Activated B cell treated with CpG ODN at 0.5 μM for 24 hours (primary cell): ENCODE measurements at regions of chr12 and their contacts with region 1.

Region 1: GRCh38 chr12:66860752-66861750 is 182.2 kb upstream of the GRIP1 start:
- DNase-seq: peak; percentile 32
- ATAC-seq: peak; percentile 50
- H3K4me3 Mint-ChIP-seq: no peak overlapping the region
- H3K27ac Mint-ChIP-seq: no peak overlapping the region
- H3K4me1 Mint-ChIP-seq: no peaks in the 10 kb centered on the region
- H3K27me3 Mint-ChIP-seq: peaks cover 11% of the 10 kb centered on the region
- CTCF ChIP-seq: peak; percentile 99

Region 2: DNA sequence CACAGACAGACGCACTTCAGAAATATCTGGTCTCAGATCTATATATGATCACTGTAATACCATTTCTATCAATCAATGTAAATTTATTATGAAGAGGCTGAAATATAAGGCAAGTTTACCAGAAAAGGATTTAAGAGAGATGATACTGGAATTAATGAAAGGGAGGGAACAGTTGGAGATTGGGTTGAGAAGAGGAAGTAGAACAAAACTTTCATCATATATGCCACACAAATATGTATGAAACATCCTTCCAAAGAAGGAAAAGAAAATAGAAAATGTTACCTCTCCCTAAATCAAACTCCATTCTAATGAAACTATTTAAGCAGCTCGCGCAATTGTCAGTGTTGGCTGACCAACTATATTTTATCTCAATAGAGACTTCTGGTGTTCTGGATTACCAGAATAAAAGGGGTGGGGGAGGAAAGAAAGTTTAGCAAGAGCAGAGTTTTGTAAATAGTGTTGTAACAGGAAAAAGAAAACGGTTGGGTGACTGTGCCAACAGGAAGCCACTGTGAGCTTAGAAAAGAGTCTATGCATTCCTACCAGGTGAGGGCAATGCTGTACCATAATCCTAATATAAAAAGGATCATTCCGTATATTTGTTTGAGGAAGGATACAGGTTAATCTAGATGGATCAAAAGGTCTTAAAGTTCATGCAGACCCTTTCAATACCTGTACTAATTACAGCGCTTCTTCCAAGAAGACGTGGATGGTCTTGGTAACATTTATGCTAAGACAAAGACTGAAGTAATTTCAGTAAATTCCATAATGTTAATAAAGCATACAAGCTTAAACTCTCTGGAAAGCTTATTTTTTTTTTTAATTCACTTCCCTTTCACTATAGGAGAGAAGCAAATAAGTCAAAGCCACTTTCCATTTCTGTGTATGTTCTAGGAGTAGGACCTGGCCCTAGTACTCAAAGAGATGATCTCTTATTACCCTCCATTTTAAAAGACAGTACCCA is 716.0 kb before region 1 on chr12:
- CTCF ChIA-PET with region 1: interaction called, 3 read pairs
- POLR2A ChIA-PET with region 1: no interaction called
- intact Hi-C with region 1: loop called (anchors 2 kb)
- DNase-seq: no peak
- ATAC-seq: no peak
- H3K4me3 Mint-ChIP-seq: no peak overlapping the region
- H3K27ac Mint-ChIP-seq: peak overlapping the region; percentile 56
- H3K4me1 Mint-ChIP-seq: peaks cover 20% of the 10 kb centered on the region
- H3K27me3 Mint-ChIP-seq: no peaks in the 10 kb centered on the region
- CTCF ChIP-seq: no peak

Region 3: DNA sequence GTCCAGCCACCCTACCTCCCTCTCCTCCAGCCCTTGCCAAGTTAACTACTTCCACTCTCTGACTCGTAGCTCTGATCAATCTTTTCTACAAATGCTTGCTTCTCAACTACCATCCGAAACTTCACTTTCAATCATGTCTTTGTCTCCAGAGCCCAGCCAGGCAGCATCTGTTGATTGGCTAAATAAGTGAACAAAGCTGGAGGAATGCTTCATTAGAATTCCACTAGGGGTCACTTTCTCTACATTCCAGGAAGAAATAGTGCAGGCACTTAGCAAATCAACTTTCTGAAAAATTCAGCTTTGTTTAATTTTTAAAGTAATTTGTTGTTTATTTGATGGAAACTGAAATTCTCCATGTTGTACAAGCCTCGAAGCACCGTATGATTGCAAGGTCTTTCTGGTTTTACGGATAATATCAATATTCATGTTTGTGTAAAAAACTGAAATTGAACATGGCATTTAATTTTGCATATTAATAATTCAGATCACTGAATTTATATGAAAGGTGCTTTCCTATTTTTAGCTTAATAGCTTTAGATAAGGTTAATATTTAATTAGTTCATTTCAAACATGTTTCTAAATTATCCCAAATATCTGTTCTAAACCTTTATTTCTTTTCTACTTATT is 591.2 kb before region 1 on chr12:
- CTCF ChIA-PET with region 1: interaction called, 10 read pairs
- POLR2A ChIA-PET with region 1: no interaction called
- intact Hi-C with region 1: loop called (anchors 1 kb)
- DNase-seq: no peak
- ATAC-seq: no peak
- H3K4me3 Mint-ChIP-seq: no peak overlapping the region
- H3K27ac Mint-ChIP-seq: no peak overlapping the region
- H3K4me1 Mint-ChIP-seq: no peaks in the 10 kb centered on the region
- H3K27me3 Mint-ChIP-seq: peaks cover 2% of the 10 kb centered on the region
- CTCF ChIP-seq: no peak

Region 4: DNA sequence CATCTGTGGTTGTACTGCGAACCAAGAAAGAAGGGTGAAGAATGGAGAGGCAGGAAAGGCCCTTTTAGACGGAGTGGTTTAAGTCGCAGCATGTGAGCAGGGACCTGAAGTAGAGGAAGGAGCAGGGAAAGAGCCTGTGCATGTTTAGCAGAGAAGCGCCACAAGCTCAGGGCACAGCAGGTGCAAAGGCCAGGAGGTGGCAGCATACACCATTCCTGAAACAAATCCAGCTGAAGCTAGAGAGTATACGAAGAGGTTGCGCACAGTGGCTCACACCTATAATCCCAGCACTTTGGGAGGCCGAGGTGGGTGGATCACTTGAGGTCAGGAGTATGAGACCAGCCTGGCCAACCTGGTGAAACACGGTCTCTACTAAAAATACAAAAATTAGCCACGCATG is 508.9 kb before region 1 on chr12:
- CTCF ChIA-PET with region 1: interaction called, 9 read pairs
- POLR2A ChIA-PET with region 1: no interaction called
- intact Hi-C with region 1: loop called (anchors 1 kb)
- DNase-seq: no peak
- ATAC-seq: peak; percentile 37
- H3K4me3 Mint-ChIP-seq: no peak overlapping the region
- H3K27ac Mint-ChIP-seq: no peak overlapping the region
- H3K4me1 Mint-ChIP-seq: no peaks in the 10 kb centered on the region
- H3K27me3 Mint-ChIP-seq: no peaks in the 10 kb centered on the region
- CTCF ChIP-seq: no peak

Region 5: DNA sequence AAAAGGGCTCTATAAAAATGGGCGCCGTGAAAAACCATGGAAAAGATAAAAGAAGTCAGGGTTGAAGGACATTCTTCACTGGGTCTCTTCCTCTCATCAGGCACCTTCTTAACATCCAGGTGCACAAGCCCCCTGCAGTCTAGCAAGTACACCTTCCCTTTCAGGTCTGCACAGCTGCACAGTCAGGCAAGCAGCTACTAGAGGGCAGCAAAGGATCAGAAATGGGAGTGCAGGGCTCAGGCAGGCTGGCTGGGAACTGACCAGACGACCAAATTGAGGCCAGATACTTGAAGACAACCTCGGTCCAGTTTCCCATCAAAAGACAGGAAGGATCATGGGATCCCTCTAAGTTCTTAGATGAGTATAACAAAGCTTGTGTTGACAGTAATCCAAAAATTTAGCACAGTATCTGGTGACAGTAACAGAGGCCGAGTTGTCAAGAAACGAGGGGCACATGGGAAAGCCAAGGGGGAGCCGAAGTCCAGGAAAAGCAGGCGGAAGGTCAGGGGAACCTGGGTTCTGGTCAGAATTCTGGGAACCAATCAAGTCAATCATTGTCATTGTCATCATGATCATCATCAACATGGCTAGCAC is 172.1 kb before region 1 on chr12:
- CTCF ChIA-PET with region 1: interaction called, 12 read pairs
- POLR2A ChIA-PET with region 1: no interaction called
- intact Hi-C with region 1: loop called (anchors 1 kb)
- DNase-seq: no peak
- ATAC-seq: peak; percentile 70
- H3K4me3 Mint-ChIP-seq: no peak overlapping the region
- H3K27ac Mint-ChIP-seq: no peak overlapping the region
- H3K4me1 Mint-ChIP-seq: peaks cover 28% of the 10 kb centered on the region
- H3K27me3 Mint-ChIP-seq: no peaks in the 10 kb centered on the region
- CTCF ChIP-seq: no peak

Region 6: DNA sequence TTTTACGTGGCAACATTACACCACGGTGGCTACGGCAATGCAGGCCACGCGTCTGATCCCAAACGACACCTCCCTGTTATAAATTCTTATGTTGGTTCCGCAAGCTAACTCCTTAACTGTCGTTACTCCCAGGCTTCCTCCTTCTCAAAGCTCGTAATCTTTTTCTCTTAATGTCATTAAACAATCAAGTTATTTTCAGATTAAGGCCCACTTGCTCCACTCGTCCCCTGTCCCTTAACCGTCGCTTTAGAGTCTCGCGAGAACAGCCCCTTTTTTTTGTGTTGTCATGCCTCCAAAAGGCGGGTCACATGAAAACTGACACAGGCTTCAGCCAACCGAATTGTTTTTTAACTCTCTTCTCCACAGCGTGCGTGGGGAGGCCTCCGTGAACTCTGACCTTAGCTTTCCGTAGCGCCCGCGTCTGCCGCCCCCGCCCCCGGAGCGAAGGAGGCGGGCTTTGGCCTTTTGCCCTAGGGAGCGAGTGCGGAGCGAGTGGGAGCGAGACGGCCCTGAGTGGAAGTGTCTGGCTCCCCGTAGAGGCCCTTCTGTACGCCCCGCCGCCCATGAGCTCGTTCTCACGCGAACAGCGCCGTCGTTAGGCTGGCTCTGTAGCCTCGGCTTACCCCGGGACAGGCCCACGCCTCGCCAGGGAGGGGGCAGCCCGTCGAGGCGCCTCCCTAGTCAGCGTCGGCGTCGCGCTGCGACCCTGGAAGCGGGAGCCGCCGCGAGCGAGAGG is 408.0 kb after region 1 on chr12 and contains the start of gene CAND1:
- CTCF ChIA-PET with region 1: no interaction called
- POLR2A ChIA-PET with region 1: no interaction called
- intact Hi-C with region 1: no loop called
- DNase-seq: peak; percentile 95
- ATAC-seq: peak; percentile 79
- H3K4me3 Mint-ChIP-seq: peak within 1 kb of the TSS; percentile 92
- H3K27ac Mint-ChIP-seq: peak within 1 kb of the TSS; percentile 99
- H3K4me1 Mint-ChIP-seq: peaks cover 44% of the 10 kb centered on the region
- H3K27me3 Mint-ChIP-seq: no peaks in the 10 kb centered on the region
- CTCF ChIP-seq: no peak
- total RNA-seq, gene CAND1: 123 and 125 TPM in 2 replicates